HEK293 (cell line): ENCODE measurements at regions of chr2 and their contacts with region 1.

Region 1: DNA sequence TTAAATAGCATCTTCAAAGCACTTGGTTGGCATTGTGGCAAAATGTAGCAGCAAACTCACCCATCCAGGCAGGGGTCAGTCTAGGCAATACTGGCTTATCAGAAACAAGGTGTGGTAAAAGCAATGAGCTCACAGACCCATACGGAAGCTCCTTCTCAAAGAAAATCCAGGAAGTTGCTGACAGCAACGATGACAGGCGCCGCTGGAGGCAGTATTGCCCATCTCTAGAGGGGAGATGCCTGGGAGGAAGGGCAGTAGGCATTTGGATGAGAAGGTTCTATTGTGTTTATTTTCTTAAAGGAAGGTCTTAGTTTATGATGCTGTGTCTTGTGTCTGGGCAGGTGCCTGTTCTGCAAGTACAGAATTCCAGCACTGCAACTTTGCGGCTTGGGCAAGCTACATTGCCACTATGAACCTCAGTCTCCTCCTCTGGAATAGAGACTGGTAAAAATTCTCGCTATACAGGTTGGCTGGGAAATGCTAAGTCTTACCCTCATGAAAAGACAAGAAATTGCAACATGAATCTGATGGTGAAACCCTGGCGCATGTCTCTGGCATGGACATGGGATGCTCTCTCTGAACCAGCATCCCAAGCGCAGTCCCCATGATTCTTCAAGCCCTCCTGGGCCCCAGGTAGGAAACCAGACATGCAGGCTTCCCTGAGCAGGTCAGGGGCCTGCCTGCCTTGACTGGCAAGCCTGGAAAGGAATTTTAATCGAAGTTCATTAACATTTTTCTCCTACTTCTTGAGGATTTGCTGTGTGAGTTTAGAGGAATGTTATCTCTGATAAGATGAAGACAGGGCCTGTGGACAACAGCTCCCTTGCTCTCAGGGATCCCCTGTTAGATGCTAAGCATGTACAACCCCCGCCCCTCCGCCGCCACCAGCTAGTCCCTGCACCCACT is 156.0 kb downstream of the TFCP2L1 start:
- H3K4me3 ChIP-seq: no peak overlapping the region
- H3K27ac ChIP-seq: no peak overlapping the region
- H3K4me1 ChIP-seq: no peaks in the 10 kb centered on the region
- CTCF ChIP-seq: no peak

Region 2: DNA sequence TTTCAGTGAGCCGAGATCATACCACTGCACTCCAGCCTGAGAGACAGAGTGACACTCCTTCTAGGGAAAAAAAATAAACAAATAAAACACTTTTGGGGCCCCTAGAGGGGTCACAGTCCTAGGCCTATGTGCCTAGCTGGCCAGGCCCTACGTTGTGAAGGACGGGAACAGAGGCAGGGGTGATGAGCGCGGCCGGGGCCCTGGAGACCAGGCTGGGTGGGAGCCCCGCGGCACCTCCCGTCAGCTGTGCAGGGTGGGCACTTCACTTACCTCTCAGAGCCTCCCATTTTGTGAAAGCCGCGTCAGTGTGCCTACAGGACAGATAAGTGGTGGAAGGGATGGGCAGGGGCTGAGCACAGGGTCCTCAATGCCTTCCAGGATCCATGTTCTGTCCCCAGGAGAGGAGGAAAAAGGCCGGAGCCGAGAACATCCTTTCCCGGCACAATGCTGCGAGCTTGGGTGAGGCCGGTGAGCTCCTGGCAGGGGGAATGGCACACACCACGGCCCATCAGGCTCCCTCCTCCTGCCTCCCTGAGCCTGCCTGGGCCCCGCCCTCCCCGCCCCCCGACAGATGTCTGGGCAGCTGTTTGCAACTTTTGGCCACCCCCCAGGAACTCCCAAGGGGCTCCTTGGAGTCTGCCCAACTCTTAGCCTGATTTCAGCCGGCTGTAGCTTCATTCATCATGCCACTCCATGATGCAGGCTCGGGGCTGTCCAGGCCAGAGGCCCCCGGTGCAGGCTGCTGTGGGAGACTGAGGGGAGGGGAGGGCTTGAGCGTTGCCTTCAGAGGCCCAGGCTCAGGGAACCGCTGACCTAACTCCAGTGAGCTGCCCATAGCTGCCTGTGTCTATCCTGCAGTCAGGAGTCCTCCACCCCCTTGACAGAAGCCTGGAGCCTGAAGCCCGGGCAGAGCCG is 40.5 kb before region 1 on chr2:
- CTCF ChIA-PET with region 1: interaction called, 12 read pairs
- POLR2A ChIA-PET with region 1: no interaction called
- H3K4me3 ChIP-seq: no peak overlapping the region
- H3K27ac ChIP-seq: no peak overlapping the region
- H3K4me1 ChIP-seq: no peaks in the 10 kb centered on the region
- CTCF ChIP-seq: no peak

Region 3: GRCh38 chr2:121104721-121105141 is 24.3 kb before region 1 on chr2:
- CTCF ChIA-PET with region 1: interaction called, 20 read pairs
- POLR2A ChIA-PET with region 1: no interaction called
- H3K4me3 ChIP-seq: no peak overlapping the region
- H3K27ac ChIP-seq: no peak overlapping the region
- H3K4me1 ChIP-seq: no peaks in the 10 kb centered on the region
- CTCF ChIP-seq: no peak

Region 4: DNA sequence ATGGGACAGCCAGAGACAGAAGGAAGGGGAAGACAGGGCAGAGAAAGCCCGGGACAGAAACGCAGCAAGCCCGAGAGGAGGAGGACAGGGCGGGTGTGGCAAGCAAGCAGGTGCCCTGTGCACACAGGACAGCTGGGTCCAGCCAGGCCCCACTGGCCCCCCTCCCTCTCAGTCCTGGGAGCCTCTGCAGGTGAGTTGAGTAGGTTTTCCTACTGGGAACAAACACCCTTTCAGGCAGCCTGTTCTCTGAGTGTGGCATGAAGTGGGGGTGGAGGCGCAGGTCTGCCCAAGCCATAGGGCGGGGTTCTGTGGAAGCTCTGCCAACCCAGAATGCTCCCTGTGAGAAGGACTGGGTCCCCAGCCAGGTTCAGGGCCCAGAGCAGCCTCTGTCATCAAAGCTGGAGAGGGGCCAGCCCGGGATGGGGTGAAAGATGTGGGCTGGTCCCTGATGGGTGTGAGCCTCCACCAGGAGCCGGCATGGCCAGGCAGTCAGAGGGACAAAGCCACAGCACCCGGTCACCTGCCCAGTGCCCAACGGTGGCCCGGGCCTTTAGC is 26.6 kb after region 1 on chr2:
- CTCF ChIA-PET with region 1: interaction called, 12 read pairs
- POLR2A ChIA-PET with region 1: no interaction called
- H3K4me3 ChIP-seq: no peak overlapping the region
- H3K27ac ChIP-seq: no peak overlapping the region
- H3K4me1 ChIP-seq: no peaks in the 10 kb centered on the region
- CTCF ChIP-seq: no peak

Region 5: GRCh38 chr2:121356058-121356640 is 227.1 kb after region 1 on chr2:
- CTCF ChIA-PET with region 1: interaction called, 95 read pairs
- POLR2A ChIA-PET with region 1: no interaction called
- H3K4me3 ChIP-seq: no peak overlapping the region
- H3K27ac ChIP-seq: no peak overlapping the region
- H3K4me1 ChIP-seq: peaks cover 3% of the 10 kb centered on the region; the same call in 1 of the 2 replicates
- CTCF ChIP-seq: peak; percentile 44

Region 6: GRCh38 chr2:121727332-121727731 is 598.3 kb after region 1 on chr2:
- CTCF ChIA-PET with region 1: no interaction called
- POLR2A ChIA-PET with region 1: no interaction called
- H3K4me3 ChIP-seq: no peak overlapping the region
- H3K27ac ChIP-seq: no peak overlapping the region
- H3K4me1 ChIP-seq: no peaks in the 10 kb centered on the region
- CTCF ChIP-seq: no peak

Region 7: GRCh38 chr2:121944072-121944831 is 815.2 kb after region 1 on chr2:
- CTCF ChIA-PET with region 1: no interaction called
- POLR2A ChIA-PET with region 1: no interaction called
- H3K4me3 ChIP-seq: no peak overlapping the region
- H3K27ac ChIP-seq: no peak overlapping the region
- H3K4me1 ChIP-seq: peaks cover 8% of the 10 kb centered on the region
- CTCF ChIP-seq: no peak